CD4-positive, alpha-beta memory T cell (primary cell): ENCODE measurements at regions of chr7 and their contacts with region 1.

Region 1: DNA sequence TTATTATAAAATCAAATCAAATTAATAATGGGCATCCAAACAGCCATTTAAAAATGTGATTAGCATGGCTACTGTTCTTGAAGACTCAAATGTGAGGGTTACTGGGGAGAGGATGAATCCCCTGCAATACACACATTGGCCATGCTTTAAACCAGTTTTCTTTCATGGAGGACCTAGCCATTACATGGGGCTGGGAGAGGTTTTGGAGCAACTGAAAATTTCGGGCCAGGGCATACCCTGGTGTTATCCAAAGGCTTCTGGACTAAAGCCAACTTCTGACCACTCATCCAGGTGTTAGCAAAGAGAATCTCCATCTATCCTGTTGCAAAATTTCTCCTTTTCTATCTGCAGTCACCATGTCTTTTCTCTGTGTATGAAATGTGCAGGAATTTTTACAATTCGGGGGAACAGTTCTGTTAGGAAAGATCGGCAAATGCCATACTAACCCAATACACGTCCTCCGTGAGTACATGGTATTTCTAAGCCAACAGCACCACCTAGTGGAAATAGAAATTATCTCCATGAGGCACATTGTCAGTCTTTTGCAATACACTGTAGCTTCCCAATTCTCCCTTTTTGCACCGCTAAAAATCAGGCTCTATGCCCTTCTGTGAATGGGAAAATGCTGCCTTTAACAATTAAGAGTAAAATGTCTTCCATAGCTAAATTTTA is 47.0 kb upstream of the ZNF107 start:
- DNase-seq: peak; percentile 44 to 65 (median 56)
- H3K4me3 ChIP-seq: no peak overlapping the region
- H3K4me3 Mint-ChIP-seq: no peak overlapping the region
- H3K27ac ChIP-seq: no peak overlapping the region
- H3K27ac Mint-ChIP-seq: no peak overlapping the region
- H3K4me1 ChIP-seq: peaks cover 3% of the 10 kb centered on the region
- H3K4me1 Mint-ChIP-seq: peaks cover 0 to 2% (median under 1%) of the 10 kb centered on the region in 4 donors
- H3K27me3 ChIP-seq: no peaks in the 10 kb centered on the region
- H3K27me3 Mint-ChIP-seq: no peaks in the 10 kb centered on the region

Region 2: DNA sequence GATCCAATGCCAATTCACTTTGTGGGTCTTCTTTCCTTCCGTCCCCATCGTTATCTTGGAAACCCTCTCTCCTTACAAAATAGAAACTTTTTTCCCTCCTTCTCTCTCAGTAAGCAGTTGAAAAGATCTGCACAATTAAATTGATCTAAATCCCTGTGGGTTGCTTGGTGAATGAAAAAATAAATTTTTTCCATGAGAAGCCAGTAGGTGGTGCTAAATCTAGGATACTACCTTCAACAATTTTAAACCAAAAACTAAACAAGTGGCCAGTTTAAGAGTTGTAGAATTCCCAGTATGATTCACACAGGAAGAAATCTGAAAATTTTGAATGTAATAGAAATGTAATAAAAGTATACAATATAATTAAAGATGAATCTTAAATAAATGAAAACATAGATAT is 1610.6 kb before region 1 on chr7:
- CTCF ChIA-PET with region 1: no interaction called
- POLR2A ChIA-PET with region 1: no interaction called
- intact Hi-C with region 1: loop called (anchors 5 kb)
- DNase-seq: no peak
- H3K4me3 ChIP-seq: no peak overlapping the region
- H3K4me3 Mint-ChIP-seq: no peak overlapping the region
- H3K27ac ChIP-seq: no peak overlapping the region
- H3K27ac Mint-ChIP-seq: no peak overlapping the region
- H3K4me1 ChIP-seq: no peaks in the 10 kb centered on the region
- H3K4me1 Mint-ChIP-seq: no peaks in the 10 kb centered on the region
- H3K27me3 ChIP-seq: no peaks in the 10 kb centered on the region
- H3K27me3 Mint-ChIP-seq: no peaks in the 10 kb centered on the region

Region 3: GRCh38 chr7:64183126-64183742 is 435.7 kb before region 1 on chr7:
- CTCF ChIA-PET with region 1: interaction called, 26 read pairs
- POLR2A ChIA-PET with region 1: no interaction called
- intact Hi-C with region 1: no loop called
- DNase-seq: peak in 4 of 5 donors; percentile 26 to 38 (median 30)
- H3K4me3 ChIP-seq: no peak overlapping the region
- H3K4me3 Mint-ChIP-seq: no peak overlapping the region
- H3K27ac ChIP-seq: no peak overlapping the region
- H3K27ac Mint-ChIP-seq: no peak overlapping the region
- H3K4me1 ChIP-seq: no peaks in the 10 kb centered on the region
- H3K4me1 Mint-ChIP-seq: no peaks in the 10 kb centered on the region
- H3K27me3 ChIP-seq: no peaks in the 10 kb centered on the region
- H3K27me3 Mint-ChIP-seq: peaks cover 3 to 6% of the 10 kb centered on the region in 2 donors

Region 4: GRCh38 chr7:64630496-64630895 is 11.6 kb after region 1 on chr7:
- CTCF ChIA-PET with region 1: interaction called, 23 read pairs
- POLR2A ChIA-PET with region 1: no interaction called
- intact Hi-C with region 1: no loop called
- DNase-seq: no peak
- H3K4me3 ChIP-seq: no peak overlapping the region
- H3K4me3 Mint-ChIP-seq: no peak overlapping the region
- H3K27ac ChIP-seq: no peak overlapping the region
- H3K27ac Mint-ChIP-seq: no peak overlapping the region
- H3K4me1 ChIP-seq: no peaks in the 10 kb centered on the region
- H3K4me1 Mint-ChIP-seq: no peaks in the 10 kb centered on the region
- H3K27me3 ChIP-seq: no peaks in the 10 kb centered on the region
- H3K27me3 Mint-ChIP-seq: no peaks in the 10 kb centered on the region